Right lobe of liver (tissue), 6 donors: ENCODE measurements at regions of chr2 and their contacts with region 1.

Region 1: DNA sequence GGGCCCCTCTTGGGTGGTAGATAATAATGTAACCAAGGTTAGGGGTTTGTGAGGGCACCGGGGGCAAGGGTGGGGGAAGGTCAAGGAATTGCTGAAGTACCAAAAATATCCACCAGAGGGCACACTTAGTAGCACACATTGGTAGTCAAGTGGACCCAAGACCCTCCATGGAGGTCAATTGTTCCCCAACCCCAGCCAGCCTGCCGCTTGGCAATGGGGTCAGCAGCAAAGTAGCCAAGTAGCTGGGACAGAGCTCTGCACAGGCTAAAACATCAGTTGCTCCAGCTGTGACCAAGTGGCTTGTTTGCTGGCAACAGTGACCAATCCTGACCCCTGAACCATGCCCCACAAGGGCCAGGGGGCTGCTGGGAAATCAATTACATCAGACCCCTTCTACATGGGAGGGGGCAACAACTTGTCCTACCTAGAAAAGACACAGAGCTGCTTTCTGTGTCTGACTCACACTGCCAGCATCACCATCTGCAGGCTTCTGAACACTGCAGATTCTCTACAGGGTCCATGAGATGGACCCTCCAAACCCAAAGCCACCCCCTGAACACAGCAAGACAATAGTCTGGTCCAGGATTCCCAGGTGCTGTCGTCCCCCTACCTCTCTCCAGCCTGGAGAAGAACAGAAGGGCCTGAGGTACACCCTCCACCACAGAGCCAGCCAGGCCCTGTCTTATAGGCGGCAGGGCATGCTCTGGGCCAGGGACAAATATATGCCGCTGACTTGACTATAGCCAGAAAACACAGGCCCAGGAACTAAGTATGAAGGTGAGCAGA is 76.0 kb downstream of the EMX1 start:
- DNase-seq: peak in 1 of 3 donors; percentile 54
- ATAC-seq: peak; percentile 36 to 62 (median 44)
- H3K4me3 ChIP-seq: no peak overlapping the region
- H3K27ac ChIP-seq: peak overlapping the region in 1 of 3 donors; percentile 60
- H3K4me1 ChIP-seq: peaks cover 0 to 44% (median 4%) of the 10 kb centered on the region in 4 donors
- H3K27me3 ChIP-seq: no peaks in the 10 kb centered on the region
- CTCF ChIP-seq: peak; percentile 75 to 80 (median 77)
- POLR2A ChIP-seq: no peak

Region 2: DNA sequence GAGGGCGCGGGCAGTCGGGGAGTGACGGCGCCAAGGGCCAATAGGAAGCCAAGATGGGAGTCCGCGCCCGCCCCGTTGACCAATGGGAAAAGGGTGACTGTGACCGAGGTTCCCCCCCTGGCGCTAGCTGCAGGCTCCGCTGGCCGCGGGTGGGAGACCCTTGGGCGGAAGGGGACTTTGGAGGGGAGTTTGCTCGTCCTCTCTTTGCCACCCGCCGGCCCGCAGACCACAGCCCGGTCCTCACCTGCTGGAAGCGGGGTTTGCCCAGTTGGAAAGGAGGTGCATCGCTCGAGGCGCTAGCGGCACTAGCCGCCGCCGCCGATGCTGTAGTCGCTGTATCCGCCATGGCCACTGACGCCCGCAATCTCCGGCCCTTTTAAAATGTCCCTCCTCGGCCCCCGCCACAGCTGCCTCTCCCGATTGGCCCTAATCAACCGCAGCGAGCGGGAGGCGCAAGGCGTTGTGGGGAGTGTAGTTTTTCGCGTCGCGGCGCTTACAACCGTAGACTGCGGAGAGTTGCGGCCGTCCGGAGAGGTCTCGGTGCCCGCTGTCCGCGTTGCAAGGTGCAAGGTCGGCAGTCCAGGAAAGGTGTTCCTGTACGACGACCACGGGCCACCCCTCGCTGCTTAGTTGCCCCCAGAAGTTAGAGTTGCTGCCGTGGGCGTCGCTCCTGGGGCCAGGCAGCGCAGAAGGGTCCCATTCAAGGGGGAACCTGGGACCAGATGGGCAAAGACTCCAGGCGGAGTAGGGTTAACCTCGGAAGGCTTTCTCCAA is 78.2 kb after region 1 on chr2 and contains the start of gene SFXN5:
- intact Hi-C with region 1: loop called (anchors 10 kb)
- DNase-seq: peak; percentile 99 to 100 (median 99)
- ATAC-seq: peak; percentile 89 to 94 (median 92)
- H3K4me3 ChIP-seq: peak within 1 kb of the TSS; percentile 78 to 99 (median 90)
- H3K27ac ChIP-seq: peak within 1 kb of the TSS; percentile 68 to 93 (median 81)
- H3K4me1 ChIP-seq: peaks cover 0 to 30% (median 14%) of the 10 kb centered on the region in 4 donors
- H3K27me3 ChIP-seq: no peaks in the 10 kb centered on the region
- CTCF ChIP-seq: peak; percentile 22 to 38 (median 34)
- POLR2A ChIP-seq: peak; percentile 86
- total RNA-seq, gene SFXN5: 33.1 to 73.4 (median 56.6) TPM

Region 3: DNA sequence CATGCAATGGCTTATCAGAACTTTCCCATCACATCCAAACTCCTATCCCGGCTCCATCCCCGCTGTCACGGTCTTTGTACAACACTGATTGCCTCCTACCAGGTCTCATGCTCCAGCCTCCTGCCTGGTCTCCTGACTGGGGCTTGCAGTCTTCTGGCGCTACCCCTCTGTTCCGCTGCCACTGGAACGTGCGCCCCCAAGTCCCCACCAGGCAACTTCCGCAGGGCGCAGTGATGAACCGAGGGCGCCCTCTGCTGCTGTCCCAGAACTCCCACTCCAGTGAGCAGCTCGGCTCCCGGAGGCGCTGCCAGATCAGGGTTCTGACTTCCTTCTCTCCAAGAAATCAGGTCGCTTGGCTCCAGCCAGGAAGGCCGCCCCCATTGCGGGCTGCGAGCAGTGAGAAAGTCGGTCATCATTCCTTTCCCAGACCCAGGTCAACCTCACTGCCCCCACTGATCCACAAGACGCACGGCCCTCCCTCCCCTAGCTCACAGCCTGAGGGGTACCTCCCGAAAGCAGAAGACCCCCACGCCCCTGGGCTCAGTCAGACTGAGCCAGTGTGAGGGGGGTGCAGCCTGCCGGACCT is 163.3 kb after region 1 on chr2:
- intact Hi-C with region 1: loop called (anchors 10 kb)
- DNase-seq: peak; percentile 59 to 74 (median 73)
- ATAC-seq: peak; percentile 87 to 99 (median 92)
- H3K4me3 ChIP-seq: no peak overlapping the region
- H3K27ac ChIP-seq: no peak overlapping the region
- H3K4me1 ChIP-seq: peaks cover 0 to 6% (median 0%) of the 10 kb centered on the region in 4 donors
- H3K27me3 ChIP-seq: no peaks in the 10 kb centered on the region
- CTCF ChIP-seq: peak; percentile 60 to 79 (median 72)
- POLR2A ChIP-seq: no peak

Region 4: GRCh38 chr2:73307720-73308119 is 314.4 kb after region 1 on chr2:
- intact Hi-C with region 1: no loop called
- DNase-seq: no peak
- ATAC-seq: no peak
- H3K4me3 ChIP-seq: no peak overlapping the region
- H3K27ac ChIP-seq: no peak overlapping the region
- H3K4me1 ChIP-seq: no peaks in the 10 kb centered on the region
- H3K27me3 ChIP-seq: no peaks in the 10 kb centered on the region
- CTCF ChIP-seq: no peak
- POLR2A ChIP-seq: no peak